Activated CD4-positive, alpha-beta memory T cell treated with anti-CD3 and anti-CD28 coated beads for 36 hours (primary cell): ENCODE measurements at regions of chr20 and their contacts with region 1.

Region 1: DNA sequence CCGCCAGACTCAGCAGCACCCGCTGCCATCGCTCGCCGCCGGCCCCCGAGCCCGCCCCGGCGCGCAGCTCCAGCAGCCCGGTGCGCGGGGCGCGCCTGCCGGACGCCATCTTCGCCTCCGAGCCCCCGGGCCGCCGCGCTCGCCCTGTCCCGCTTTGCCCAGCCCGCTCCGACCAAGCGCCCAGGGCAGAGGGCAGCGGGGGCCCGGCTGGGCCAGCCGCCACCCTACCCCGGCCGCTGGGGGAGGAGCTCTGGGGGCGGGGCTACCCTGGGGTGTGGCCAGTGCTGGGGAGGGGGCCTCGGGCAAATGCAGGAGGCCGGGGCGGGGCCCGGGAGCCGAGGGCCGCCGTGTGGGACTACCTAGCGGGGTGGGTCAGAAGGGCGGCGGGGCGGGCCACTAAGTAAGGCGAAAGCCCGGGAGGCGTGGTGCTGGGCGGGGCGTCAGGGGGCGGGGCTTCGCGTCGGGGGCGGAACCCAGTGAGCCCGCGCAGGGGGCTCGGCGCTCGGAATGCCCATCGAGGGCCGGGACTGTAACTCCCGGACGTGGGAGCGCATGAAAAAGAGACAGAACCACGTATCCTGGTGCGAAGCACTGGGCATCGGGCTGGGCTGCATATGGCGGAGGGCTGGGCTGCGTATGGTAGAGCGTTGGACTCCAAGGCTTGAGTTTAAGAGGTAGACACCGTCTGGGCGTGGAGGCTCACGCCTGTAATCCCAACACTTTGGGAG is at the start of gene SNTA1:
- DNase-seq: peak; percentile 94
- H3K4me3 Mint-ChIP-seq: peak within 1 kb of the TSS; percentile 84
- H3K27ac Mint-ChIP-seq: peak within 1 kb of the TSS; percentile 81
- H3K4me1 Mint-ChIP-seq: peaks cover 17% of the 10 kb centered on the region
- H3K27me3 Mint-ChIP-seq: no peaks in the 10 kb centered on the region
- total RNA-seq, gene SNTA1: 5.6 to 5.7 TPM

Region 2: GRCh38 chr20:33373735-33374605 is 69.7 kb before region 1 on chr20:
- CTCF ChIA-PET with region 1: interaction called, 3 read pairs
- POLR2A ChIA-PET with region 1: no interaction called
- intact Hi-C with region 1: loop called (anchors 1 kb)
- DNase-seq: no peak
- H3K4me3 Mint-ChIP-seq: no peak overlapping the region
- H3K27ac Mint-ChIP-seq: no peak overlapping the region
- H3K4me1 Mint-ChIP-seq: peaks cover 49% of the 10 kb centered on the region
- H3K27me3 Mint-ChIP-seq: no peaks in the 10 kb centered on the region

Region 3: GRCh38 chr20:33401184-33401920 is 42.3 kb before region 1 on chr20 and contains the start of gene CDK5RAP1:
- CTCF ChIA-PET with region 1: interaction called, 10 read pairs
- POLR2A ChIA-PET with region 1: interaction called, 5 read pairs
- intact Hi-C with region 1: loop called (anchors 1 kb)
- DNase-seq: peak; percentile 91
- H3K4me3 Mint-ChIP-seq: peak within 1 kb of the TSS; percentile 94
- H3K27ac Mint-ChIP-seq: peak within 1 kb of the TSS; percentile 86
- H3K4me1 Mint-ChIP-seq: peaks cover 40% of the 10 kb centered on the region
- H3K27me3 Mint-ChIP-seq: no peaks in the 10 kb centered on the region
- total RNA-seq, gene CDK5RAP1: 39.6 to 40.3 TPM

Region 4: GRCh38 chr20:33489495-33490022 is 45.9 kb after region 1 on chr20:
- CTCF ChIA-PET with region 1: no interaction called
- POLR2A ChIA-PET with region 1: interaction called, 7 read pairs
- intact Hi-C with region 1: loop called (anchors 1 kb)
- DNase-seq: peak; percentile 100
- H3K4me3 Mint-ChIP-seq: peak overlapping the region; percentile 83
- H3K27ac Mint-ChIP-seq: peak overlapping the region; percentile 77
- H3K4me1 Mint-ChIP-seq: peaks cover 12% of the 10 kb centered on the region
- H3K27me3 Mint-ChIP-seq: no peaks in the 10 kb centered on the region

Region 5: GRCh38 chr20:33621717-33622400 is 178.2 kb after region 1 on chr20:
- CTCF ChIA-PET with region 1: no interaction called
- POLR2A ChIA-PET with region 1: no interaction called
- intact Hi-C with region 1: no loop called
- DNase-seq: no peak
- H3K4me3 Mint-ChIP-seq: no peak overlapping the region
- H3K27ac Mint-ChIP-seq: no peak overlapping the region
- H3K4me1 Mint-ChIP-seq: peaks cover 22% of the 10 kb centered on the region
- H3K27me3 Mint-ChIP-seq: no peaks in the 10 kb centered on the region